ENCODE measurements at regions of chr2 and their contacts with region 1.

Region 1: DNA sequence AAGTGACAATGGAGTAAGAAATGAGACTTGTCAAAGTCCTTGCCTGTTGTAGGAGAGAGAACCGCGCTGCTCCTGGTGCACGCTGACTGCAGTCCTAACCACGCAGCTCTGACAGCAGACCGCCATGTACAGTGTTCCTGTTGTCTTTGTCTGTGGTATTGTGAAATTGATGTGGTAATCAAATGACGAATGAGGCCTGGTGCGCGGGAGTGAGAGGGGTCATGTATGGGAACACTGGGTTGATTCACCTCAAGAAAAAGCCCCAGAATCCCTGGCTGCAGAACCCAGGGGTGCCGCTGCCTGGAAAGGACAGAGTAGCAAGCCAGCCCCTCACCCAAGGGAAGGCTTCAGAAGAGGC is 64.0 kb downstream of the INPP4A start:
- DNase-seq: peak; percentile 36 to 72
- ATAC-seq: peak; percentile 62 to 77 (median 73)
- H3K4me3 ChIP-seq: no peak overlapping the region
- H3K4me3 Mint-ChIP-seq: peak overlapping the region; percentile 53
- H3K27ac ChIP-seq: peak overlapping the region; percentile 55
- H3K27ac Mint-ChIP-seq: peak overlapping the region; percentile 85 to 91
- H3K4me1 ChIP-seq: peaks cover 96% of the 10 kb centered on the region
- H3K4me1 Mint-ChIP-seq: peaks cover 94 to 97% of the 10 kb centered on the region in 2 donors
- H3K27me3 ChIP-seq: no peaks in the 10 kb centered on the region
- H3K27me3 Mint-ChIP-seq: no peaks in the 10 kb centered on the region
- CTCF ChIP-seq: no peak

Region 2: GRCh38 chr2:98212092-98212797 is 296.4 kb before region 1 on chr2:
- intact Hi-C with region 1: no loop called
- DNase-seq: no peak
- ATAC-seq: no peak
- H3K4me3 ChIP-seq: no peak overlapping the region
- H3K4me3 Mint-ChIP-seq: no peak overlapping the region
- H3K27ac ChIP-seq: no peak overlapping the region
- H3K27ac Mint-ChIP-seq: no peak overlapping the region
- H3K4me1 ChIP-seq: no peaks in the 10 kb centered on the region
- H3K4me1 Mint-ChIP-seq: no peaks in the 10 kb centered on the region
- H3K27me3 ChIP-seq: peaks cover 3% of the 10 kb centered on the region
- H3K27me3 Mint-ChIP-seq: peaks cover 32 to 42% of the 10 kb centered on the region in 2 donors
- CTCF ChIP-seq: no peak

Region 3: GRCh38 chr2:98479959-98480524 is 28.6 kb before region 1 on chr2:
- intact Hi-C with region 1: loop called (anchors 2 kb)
- DNase-seq: peak in 1 of 2 donors; percentile 57
- ATAC-seq: peak; percentile 73 to 79 (median 73)
- H3K4me3 ChIP-seq: no peak overlapping the region
- H3K4me3 Mint-ChIP-seq: peak overlapping the region; percentile 82
- H3K27ac ChIP-seq: peak overlapping the region; percentile 52
- H3K27ac Mint-ChIP-seq: peak overlapping the region; percentile 98 to 99
- H3K4me1 ChIP-seq: peaks cover 92% of the 10 kb centered on the region
- H3K4me1 Mint-ChIP-seq: peaks cover 95 to 99% of the 10 kb centered on the region in 2 donors
- H3K27me3 ChIP-seq: no peaks in the 10 kb centered on the region
- H3K27me3 Mint-ChIP-seq: no peaks in the 10 kb centered on the region
- CTCF ChIP-seq: no peak

Measured in natural killer cell (primary cell).